ENCODE measurements at regions of chr11 and their contacts with region 1.

Region 1: DNA sequence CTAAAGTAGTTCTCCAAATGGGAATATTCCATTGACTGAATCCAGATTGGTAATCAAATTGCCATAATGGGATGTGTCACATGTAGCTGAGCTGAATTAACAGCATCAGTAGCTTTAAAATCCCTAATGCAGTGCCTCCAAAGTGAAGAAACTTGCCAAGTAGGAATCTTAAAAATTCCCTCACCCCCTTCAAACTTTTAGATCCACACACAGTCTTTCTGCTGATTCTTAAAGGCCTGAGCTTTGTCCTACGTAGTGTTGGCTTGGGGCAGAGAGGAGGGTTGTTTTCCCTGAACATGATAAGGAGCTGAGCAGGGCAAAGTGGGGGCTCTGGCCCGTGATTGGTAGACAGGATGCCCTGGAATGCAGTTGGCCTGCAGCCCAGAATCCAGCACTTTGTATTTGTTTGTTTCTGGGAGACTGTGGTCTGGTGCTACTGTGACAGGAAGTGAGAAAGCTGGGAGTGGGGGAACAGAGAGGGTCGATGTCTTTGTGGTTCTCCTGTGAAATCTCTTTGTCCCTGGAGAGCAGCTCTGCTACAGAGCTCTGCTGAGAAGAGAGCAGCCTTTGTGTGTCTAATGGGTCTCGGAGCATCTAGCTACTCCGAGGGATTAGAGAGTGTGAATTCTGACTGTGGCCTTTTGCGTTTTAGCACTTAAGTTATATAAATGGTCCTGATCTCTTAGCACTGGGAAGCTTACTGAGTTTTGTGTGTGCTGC is 16.9 kb downstream of the CTNND1 start:
- DNase-seq: peak; percentile 93
- H3K4me3 Mint-ChIP-seq: peak overlapping the region; percentile 66
- H3K27ac Mint-ChIP-seq: peak overlapping the region; percentile 99
- H3K4me1 Mint-ChIP-seq: peaks cover 93% of the 10 kb centered on the region
- H3K27me3 Mint-ChIP-seq: no peaks in the 10 kb centered on the region
- CTCF ChIP-seq: no peak

Region 2: DNA sequence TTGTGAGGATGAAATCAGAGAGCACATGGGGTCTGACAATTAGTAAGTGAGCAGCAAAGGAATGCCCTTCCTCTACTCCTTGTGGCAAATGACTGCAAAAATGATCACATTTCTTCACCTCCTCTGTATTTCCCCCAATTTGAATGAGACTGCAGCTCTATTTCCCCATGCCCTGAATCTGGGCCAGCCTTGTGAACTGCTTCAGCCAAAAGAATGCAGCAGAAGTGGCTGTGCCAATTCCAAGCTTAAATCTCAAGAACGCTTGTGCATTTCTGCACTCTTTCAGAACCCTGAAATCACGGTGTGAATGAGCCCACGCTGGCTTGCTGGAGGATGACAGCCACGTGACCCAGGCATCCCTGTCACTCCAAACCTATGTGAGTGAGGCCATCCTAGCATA is 361.4 kb before region 1 on chr11:
- CTCF ChIA-PET with region 1: no interaction called
- intact Hi-C with region 1: no loop called
- DNase-seq: no peak
- H3K4me3 Mint-ChIP-seq: no peak overlapping the region
- H3K27ac Mint-ChIP-seq: no peak overlapping the region
- H3K4me1 Mint-ChIP-seq: peaks cover 9% of the 10 kb centered on the region
- H3K27me3 Mint-ChIP-seq: no peaks in the 10 kb centered on the region
- CTCF ChIP-seq: no peak

Region 3: DNA sequence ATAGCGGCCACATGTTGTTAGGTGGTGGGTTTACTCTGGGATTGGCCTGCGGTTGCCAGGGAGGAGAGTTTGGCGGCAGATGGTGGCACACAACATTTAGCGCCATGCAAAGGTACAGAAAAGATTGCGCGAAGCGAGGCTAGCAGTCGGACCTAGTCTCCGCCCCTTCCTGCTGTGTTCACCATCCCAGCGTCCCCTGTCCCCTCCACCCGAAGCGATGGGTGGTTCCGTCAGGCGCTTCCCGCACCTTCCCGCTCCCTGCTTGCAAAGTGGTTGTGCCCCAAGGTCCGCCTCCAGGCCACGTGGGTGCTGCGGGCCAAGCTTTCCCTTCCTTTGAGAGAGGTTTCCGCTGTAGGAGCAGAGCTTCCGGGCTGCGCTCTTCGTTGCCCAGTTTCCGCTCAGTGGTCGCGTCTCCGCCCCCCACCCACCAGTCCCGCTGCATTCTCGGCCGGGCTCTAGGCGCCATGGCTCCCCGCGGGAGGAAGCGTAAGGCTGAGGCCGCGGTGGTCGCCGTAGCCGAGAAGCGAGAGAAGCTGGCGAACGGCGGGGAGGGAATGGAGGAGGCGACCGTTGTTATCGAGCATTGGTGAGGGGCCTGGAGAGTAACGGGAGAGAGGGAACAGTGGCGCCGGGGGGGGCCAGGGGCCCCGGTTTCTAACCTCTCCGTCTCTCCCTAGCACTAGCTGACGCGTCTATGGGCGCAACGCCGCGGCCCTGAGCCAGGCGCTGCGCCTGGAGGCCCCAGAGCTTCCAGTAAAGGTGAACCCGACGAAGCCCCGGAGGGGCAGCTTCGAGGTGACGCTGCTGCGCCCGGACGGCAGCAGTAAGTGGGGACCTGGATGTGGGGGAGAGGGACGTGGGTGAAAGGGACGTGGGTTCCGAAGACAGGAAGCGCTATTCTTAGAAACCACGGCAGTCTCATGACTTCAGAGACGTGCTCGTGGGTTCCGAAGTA is 37.1 kb before region 1 on chr11 and contains the start of gene SELENOH:
- CTCF ChIA-PET with region 1: no interaction called
- intact Hi-C with region 1: no loop called
- DNase-seq: peak; percentile 97
- H3K4me3 Mint-ChIP-seq: peak within 1 kb of the TSS; percentile 96
- H3K27ac Mint-ChIP-seq: peak within 1 kb of the TSS; percentile 85
- H3K4me1 Mint-ChIP-seq: peaks cover 10% of the 10 kb centered on the region
- H3K27me3 Mint-ChIP-seq: no peaks in the 10 kb centered on the region
- CTCF ChIP-seq: no peak
- total RNA-seq, gene SELENOH: 124 and 131 TPM in 2 replicates

Region 4: GRCh38 chr11:57761301-57762234 is 16.9 kb before region 1 on chr11 and contains the start of gene CTNND1:
- CTCF ChIA-PET with region 1: interaction called, 9 read pairs
- intact Hi-C with region 1: loop called (anchors 1 kb)
- DNase-seq: peak; percentile 89
- H3K4me3 Mint-ChIP-seq: peak within 1 kb of the TSS; percentile 88
- H3K27ac Mint-ChIP-seq: peak within 1 kb of the TSS; percentile 99
- H3K4me1 Mint-ChIP-seq: peaks cover 22% of the 10 kb centered on the region
- H3K27me3 Mint-ChIP-seq: no peaks in the 10 kb centered on the region
- CTCF ChIP-seq: no peak
- total RNA-seq, gene CTNND1: 318 and 323 TPM in 2 replicates

Region 5: DNA sequence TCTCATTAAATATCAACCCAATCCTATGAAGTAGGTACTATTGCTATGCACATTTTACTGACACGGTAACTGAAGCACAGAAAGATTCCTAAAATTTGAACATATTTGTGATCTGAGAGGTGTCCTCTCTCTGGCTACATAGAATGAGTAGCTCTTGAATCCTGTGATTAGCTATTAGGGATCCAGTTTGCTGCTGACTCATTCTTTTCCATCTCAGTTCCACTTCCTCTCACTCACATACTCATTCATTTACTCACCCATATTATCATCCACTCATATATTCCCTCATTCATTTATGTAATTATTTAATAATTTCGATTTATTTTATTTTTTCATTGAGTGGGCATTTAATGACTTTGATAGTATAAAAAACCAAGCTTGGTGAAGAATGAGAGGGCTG is 537.7 kb after region 1 on chr11:
- CTCF ChIA-PET with region 1: no interaction called
- intact Hi-C with region 1: no loop called
- DNase-seq: no peak
- H3K4me3 Mint-ChIP-seq: no peak overlapping the region
- H3K27ac Mint-ChIP-seq: no peak overlapping the region
- H3K4me1 Mint-ChIP-seq: no peaks in the 10 kb centered on the region
- H3K27me3 Mint-ChIP-seq: no peaks in the 10 kb centered on the region
- CTCF ChIP-seq: no peak

Measured in Calu3 (cell line).